ENCODE measurements at regions of chr6 and their contacts with region 1.

Region 1: GRCh38 chr6:142207265-142207877 is 60.3 kb downstream of the VTA1 start:
- DNase-seq: peak; percentile 33
- H3K4me3 ChIP-seq: no peak overlapping the region
- H3K27ac ChIP-seq: no peak overlapping the region
- H3K27me3 ChIP-seq: no peaks in the 10 kb centered on the region
- CTCF ChIP-seq: peak; percentile 92

Region 2: DNA sequence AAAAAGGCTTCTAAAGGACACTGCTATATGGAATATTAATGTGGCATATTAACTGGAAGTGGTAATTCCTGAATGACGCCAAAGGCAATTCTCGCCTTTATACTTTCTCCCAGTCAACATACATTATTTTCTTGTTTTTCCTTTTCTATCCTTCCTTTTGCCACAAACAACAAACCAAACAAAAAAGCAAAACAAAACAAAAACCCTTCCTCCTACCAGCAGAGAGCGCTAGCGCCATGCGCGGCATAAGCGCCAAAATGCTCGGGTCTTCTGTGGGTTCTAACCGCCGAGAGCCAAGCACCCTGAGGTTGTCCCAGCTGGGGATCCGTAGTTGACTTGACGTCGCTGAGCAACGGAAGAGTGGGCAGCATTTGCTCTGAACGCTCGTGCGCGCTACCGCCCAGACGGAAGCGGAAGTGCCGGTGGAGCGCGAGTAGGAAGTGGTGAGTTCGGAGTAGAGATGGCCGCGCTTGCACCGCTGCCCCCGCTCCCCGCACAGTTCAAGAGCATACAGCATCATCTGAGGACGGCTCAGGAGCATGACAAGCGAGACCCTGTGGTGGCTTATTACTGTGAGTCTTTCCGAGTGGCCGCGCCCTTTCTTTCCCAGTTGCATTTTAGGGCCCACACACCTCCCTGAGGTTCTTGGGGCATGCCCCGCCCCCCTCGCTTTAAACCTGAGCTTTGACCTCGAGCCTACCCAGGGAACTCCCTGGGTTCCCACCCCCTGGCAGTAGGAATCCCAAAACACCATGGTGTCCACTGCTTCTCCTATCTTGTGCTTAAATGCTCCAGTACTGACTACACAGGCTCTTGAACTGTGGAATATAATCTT is 60.3 kb before region 1 on chr6 and contains the starts of genes NMBR and VTA1:
- CTCF ChIA-PET with region 1: interaction called, 68 read pairs
- POLR2A ChIA-PET with region 1: interaction called, 6 read pairs
- DNase-seq: peak; percentile 99
- H3K4me3 ChIP-seq: peak within 1 kb of the TSS; percentile 97
- H3K27ac ChIP-seq: peak within 1 kb of the TSS; percentile 3
- H3K27me3 ChIP-seq: no peaks in the 10 kb centered on the region
- CTCF ChIP-seq: peak; percentile 98
- polyA plus RNA-seq, gene NMBR: 0.15 TPM in 1 of 2 replicates, not detected in the other
- polyA plus RNA-seq, gene VTA1: 81.4 and 103 TPM in 2 replicates

Region 3: DNA sequence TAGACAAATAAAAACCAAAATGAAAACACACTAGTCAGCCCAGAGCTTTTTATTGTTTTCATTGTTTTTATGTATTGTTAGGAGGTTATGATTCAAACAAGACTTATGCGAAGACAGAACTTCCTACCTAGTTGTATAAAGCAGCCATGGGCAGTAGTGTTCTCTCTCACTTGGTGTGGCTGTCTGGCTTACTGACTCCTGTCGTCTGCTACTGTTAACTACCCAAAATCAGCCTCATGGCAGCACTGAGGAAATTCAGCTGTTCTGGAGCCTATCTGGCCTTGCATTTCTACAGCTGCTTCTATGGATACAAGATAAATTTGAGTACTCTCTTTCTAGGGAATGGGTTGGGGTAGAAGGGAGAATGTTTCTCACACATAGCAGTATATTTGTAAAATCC is 39.9 kb before region 1 on chr6:
- CTCF ChIA-PET with region 1: interaction called, 30 read pairs
- POLR2A ChIA-PET with region 1: no interaction called
- DNase-seq: no peak
- H3K4me3 ChIP-seq: no peak overlapping the region
- H3K27ac ChIP-seq: no peak overlapping the region
- H3K27me3 ChIP-seq: no peaks in the 10 kb centered on the region
- CTCF ChIP-seq: no peak

Region 4: GRCh38 chr6:142195862-142196541 is 11.4 kb before region 1 on chr6:
- CTCF ChIA-PET with region 1: interaction called, 29 read pairs
- POLR2A ChIA-PET with region 1: interaction called, 3 read pairs
- DNase-seq: no peak
- H3K4me3 ChIP-seq: no peak overlapping the region
- H3K27ac ChIP-seq: no peak overlapping the region
- H3K27me3 ChIP-seq: no peaks in the 10 kb centered on the region
- CTCF ChIP-seq: no peak

Region 5: DNA sequence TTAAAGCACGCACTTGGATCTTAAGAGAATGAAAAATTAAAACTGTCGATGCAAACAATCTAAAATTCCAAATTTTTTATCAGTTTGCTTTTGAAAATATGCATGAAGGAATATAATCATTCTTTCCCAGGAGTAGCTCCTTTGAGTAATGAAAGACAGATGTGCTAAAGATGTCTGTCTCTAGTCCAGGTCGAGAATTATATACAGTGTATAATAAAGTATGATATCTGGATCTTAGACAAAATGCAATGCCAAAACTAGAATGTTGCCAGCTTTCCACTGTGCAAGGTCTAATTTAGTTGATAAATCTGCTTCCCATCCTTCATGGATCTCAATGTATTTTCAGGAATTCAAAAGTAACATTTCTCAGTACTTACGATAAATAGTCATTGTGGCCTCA is 29.3 kb after region 1 on chr6:
- CTCF ChIA-PET with region 1: interaction called, 10 read pairs
- POLR2A ChIA-PET with region 1: no interaction called
- DNase-seq: no peak
- H3K4me3 ChIP-seq: no peak overlapping the region
- H3K27ac ChIP-seq: no peak overlapping the region
- H3K27me3 ChIP-seq: no peaks in the 10 kb centered on the region
- CTCF ChIP-seq: no peak

Region 6: DNA sequence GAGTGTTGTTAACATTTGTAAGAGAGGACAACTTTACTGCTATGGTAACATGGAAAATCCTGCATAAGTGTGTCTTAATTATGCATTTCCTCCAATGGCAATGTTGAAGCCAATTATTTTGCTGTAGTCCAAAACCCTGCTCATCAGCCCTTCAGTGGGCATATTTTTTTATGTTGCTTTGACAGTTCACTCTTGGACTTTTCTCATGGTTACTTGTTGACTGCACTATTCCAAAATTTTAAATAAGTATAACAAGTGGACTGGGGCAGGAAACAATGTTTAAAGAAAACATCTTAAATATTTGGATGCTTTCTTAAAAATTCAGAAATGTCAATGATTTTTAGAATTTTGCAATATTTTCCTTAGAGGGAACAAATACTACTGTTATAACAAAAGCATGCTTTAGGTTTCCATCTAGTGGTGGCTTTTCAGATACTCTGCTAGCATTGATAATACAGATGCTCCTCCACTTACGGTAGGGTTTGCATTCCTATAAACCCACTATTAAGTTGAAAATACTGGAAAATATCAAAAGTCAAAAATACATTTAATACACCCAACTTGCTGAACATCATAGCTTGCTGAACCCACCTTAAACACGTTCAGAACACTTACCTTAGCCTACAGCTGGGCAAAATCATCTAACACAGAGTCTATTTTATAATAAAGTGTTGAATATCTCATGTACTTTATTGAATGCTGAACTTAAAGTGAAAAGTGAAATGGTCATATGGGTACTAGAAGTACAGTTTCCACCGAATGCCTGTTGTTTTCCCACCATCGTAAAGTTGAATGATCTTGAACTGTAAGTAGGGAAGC is 180.8 kb after region 1 on chr6:
- CTCF ChIA-PET with region 1: interaction called, 27 read pairs
- POLR2A ChIA-PET with region 1: no interaction called
- DNase-seq: no peak
- H3K4me3 ChIP-seq: no peak overlapping the region
- H3K27ac ChIP-seq: no peak overlapping the region
- H3K27me3 ChIP-seq: no peaks in the 10 kb centered on the region
- CTCF ChIP-seq: peak; percentile 78